Activated CD4-positive, alpha-beta memory T cell treated with anti-CD3 and anti-CD28 coated beads for 36 hours (primary cell): ENCODE measurements at regions of chr19 and their contacts with region 1.

Region 1: DNA sequence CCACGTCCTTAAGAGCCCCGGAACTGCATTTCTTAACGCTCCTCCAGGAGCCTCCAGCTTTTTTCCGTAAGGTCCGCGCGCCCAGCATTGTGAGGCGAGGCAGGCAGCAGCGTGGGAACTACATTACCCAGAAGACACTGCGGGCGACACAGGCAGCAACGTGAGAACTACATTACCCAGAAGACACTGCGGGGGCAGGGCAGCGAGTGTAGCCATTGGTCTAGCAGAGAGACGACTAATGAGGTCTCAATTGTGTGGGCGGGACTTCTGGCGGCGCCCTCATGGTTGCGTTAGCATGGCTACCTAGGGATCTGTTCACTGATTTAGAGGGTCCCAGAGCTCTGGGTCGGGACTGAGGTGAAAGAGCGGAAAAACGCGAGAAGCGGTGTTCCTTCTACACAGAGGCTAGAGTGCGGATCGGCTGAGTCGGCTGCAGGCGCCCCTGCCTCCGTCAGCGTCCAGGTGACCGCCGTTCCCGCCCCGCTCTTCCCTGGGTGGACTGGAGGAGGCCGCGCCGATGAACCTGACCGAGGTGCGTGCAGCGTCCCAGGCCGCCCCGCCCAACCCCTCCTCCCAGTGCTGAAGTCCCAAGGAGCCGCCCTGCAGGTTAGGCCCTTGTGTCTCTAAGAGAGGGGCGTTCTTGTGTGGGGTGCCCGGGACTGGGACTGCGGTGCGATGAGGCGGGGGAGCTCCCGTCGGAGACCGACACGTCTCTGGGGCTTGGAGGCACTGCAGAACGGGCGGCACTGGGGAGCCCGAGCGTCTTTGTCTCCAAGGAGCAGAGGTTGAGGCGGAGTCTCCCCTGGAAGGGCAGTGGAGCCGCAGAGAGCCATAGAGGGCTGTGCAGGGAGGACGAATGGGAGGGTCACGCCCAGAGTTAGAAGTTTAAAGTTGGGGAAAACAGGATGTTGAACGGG is at the start of gene ZNF749:
- DNase-seq: peak; percentile 97
- H3K4me3 Mint-ChIP-seq: peak within 1 kb of the TSS; percentile 93
- H3K27ac Mint-ChIP-seq: peak within 1 kb of the TSS; percentile 85
- H3K4me1 Mint-ChIP-seq: peaks cover 24% of the 10 kb centered on the region
- H3K27me3 Mint-ChIP-seq: no peaks in the 10 kb centered on the region
- total RNA-seq, gene ZNF749: 9.3 to 9.4 TPM

Region 2: DNA sequence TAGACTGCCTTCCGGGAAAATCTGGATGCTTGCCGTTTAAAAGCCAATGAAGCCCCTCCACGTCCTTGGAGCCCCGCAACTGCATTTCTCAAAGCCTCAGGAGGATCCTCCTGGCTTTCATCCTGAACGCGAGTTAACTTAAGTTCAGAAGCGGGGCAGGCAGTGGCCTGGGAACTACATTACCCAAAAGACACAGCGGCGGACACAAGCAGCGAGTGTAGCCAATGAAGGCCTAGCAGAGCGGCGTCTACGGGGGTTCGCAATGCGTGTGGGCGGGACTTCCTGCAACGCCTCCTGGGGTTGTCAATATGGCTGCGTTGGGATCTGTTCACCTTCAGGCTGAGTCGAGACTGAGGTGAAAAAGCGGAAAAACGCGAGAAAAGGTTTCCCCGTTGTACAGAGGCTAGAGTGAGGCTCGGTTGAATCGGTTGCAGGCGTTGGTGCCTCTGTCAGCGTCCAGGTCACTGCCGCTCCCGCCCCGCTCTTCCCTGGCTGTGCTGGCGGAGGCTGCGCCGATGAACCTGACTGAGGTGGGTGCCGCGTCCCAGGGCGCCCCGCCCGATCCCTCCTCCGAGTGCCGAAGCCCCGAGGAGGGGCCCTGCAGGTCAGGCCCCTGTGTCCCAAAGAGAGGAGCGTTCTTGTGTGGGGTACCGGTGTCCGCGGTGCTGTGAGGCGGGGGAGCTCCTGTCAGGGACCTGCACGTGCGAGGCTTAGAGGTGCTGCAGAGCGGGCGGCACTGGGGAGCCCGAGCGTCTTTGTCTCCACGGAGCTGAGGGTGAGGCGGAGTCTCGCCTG is 24.2 kb before region 1 on chr19 and contains the start of gene ZNF17:
- CTCF ChIA-PET with region 1: no interaction called
- POLR2A ChIA-PET with region 1: interaction called, 3 read pairs
- intact Hi-C with region 1: loop called (anchors 1 kb)
- DNase-seq: peak; percentile 95
- H3K4me3 Mint-ChIP-seq: peak within 1 kb of the TSS; percentile 92
- H3K27ac Mint-ChIP-seq: peak within 1 kb of the TSS; percentile 66
- H3K4me1 Mint-ChIP-seq: peaks cover 14% of the 10 kb centered on the region
- H3K27me3 Mint-ChIP-seq: no peaks in the 10 kb centered on the region
- total RNA-seq, gene ZNF17: 4.2 to 5.0 TPM

Region 3: DNA sequence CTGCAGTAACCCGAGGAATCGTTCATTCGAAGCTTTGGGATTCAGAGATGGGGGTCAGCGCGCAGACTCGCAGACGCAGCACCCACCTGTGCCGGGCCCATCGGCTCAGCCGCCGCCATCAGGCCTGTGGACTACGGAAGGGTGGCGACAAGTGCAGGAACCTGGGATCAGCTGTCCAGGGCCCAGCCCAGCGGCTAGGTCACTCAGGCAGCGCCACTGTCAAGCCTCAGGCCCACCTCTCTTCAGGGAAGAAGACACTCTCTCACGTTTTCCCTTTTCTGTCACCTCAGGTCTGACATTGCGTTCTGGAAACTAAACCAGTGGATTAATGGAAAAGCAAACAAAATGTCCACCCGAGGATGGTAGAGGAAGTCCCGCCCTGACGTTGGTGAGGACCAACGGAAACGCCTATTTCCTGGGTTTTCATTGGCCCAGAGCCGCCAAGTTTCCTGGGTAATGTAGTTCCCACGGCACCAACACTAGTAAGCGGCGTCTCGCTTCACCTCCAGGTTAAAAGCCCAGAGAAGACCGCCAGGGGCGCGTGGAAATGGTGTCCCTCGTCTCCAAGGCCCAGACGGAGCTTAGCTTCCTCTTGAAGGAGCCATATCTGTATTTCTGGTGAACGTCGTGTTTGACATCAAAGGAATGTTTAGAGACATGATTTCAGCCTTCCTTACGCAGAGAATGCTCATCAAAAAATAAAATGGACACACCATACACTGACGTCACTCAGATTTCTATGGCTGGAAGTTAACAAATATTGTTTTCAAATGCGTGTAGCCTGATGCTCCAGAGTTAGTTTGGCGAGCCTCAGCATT is 42.1 kb after region 1 on chr19 and contains the start of gene ZNF772:
- CTCF ChIA-PET with region 1: no interaction called
- POLR2A ChIA-PET with region 1: interaction called, 3 read pairs
- intact Hi-C with region 1: loop called (anchors 2 kb)
- DNase-seq: peak; percentile 91
- H3K4me3 Mint-ChIP-seq: peak within 1 kb of the TSS; percentile 84
- H3K27ac Mint-ChIP-seq: peak within 1 kb of the TSS; percentile 84
- H3K4me1 Mint-ChIP-seq: peaks cover 10% of the 10 kb centered on the region
- H3K27me3 Mint-ChIP-seq: no peaks in the 10 kb centered on the region
- total RNA-seq, gene ZNF772: 3.9 to 4.0 TPM

Region 4: DNA sequence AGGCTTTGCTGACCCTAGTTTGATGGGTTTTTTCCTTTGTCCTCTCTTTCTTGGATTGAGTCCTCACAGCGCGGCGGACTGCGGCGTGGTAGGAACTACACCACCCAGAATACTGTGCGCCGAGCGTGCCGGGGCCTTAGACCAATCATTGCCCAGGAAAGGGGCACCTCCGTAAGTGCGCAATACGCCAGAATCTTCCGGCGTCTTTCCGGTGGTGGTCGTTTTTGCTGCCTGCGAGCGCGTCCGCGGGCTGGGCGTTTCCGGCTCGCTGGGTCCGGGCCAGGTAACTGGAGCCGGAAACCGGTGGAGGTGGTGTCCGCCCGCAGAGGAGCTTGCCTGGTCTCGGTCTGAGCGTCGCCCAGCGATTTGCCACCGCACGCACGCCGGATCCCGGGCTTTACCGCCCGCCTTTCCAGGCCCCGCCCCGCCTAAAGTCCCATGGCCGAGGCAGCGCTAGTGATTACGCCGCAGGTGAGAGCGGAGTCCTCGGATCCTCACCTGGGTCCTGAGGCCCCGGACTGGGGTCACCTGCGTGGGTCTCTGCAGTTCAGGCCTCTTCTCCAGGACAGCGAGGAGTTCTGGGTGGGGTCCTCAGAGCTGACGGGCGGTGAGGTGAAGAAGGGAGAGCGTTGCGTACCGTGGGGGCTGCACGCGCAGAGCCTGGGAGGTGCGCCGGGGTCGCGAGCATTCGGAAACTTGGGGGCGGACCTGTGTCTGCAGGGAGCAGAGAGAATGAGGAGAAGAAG is 92.0 kb after region 1 on chr19 and contains the start of gene ZNF549:
- CTCF ChIA-PET with region 1: no interaction called
- POLR2A ChIA-PET with region 1: no interaction called
- intact Hi-C with region 1: loop called (anchors 1 kb)
- DNase-seq: peak; percentile 94
- H3K4me3 Mint-ChIP-seq: peak within 1 kb of the TSS; percentile 85
- H3K27ac Mint-ChIP-seq: peak within 1 kb of the TSS; percentile 54
- H3K4me1 Mint-ChIP-seq: peaks cover 18% of the 10 kb centered on the region
- H3K27me3 Mint-ChIP-seq: no peaks in the 10 kb centered on the region
- total RNA-seq, gene ZNF549: 2.9 to 3.4 TPM